ENCODE measurements at regions of chr22 and their contacts with region 1.

Region 1: GRCh38 chr22:19909350-19910179 is 32.0 kb upstream of the COMT start:
- DNase-seq: no peak
- H3K4me3 ChIP-seq: no peak overlapping the region
- H3K27me3 ChIP-seq: no peaks in the 10 kb centered on the region
- CTCF ChIP-seq: peak; percentile 90

Region 2: GRCh38 chr22:19756288-19757128 is 153.1 kb before region 1 on chr22:
- CTCF ChIA-PET with region 1: interaction called, 12 read pairs
- POLR2A ChIA-PET with region 1: no interaction called
- DNase-seq: no peak
- H3K4me3 ChIP-seq: no peak overlapping the region
- H3K27me3 ChIP-seq: peaks cover 40% of the 10 kb centered on the region
- CTCF ChIP-seq: peak; percentile 53

Region 3: DNA sequence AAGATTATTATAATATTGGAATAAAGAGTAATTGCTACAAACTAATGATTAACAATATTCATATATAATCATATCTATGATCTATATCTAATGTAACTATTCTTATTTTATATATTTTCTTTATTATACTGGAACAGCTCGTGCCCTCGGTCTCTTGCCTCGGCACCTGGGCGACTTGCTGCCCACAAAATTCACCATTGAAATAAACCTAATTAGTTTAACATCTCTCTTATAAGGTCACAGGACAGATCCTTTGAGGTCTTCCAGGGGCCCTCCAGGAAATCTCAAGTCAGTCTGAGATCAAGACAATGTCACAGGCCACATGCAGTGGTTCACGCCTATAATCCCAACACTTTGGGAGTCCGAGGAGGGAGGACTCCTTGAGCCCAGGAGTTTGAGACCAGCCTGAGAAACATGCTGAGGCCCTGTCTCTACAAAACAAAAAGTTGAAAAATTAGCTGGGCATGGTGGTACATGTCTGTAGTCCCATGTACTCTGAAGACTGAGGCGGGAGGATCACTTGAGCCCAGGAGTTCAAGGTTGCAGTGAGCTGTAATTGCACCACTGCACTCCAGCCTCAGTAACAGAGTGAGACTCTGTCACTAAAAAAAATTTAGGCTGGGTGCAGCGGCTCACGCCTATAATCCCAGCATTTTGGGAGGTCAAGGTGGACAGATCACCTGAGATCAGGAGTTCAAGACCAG is 38.6 kb after region 1 on chr22:
- CTCF ChIA-PET with region 1: interaction called, 10 read pairs
- POLR2A ChIA-PET with region 1: no interaction called
- DNase-seq: no peak
- H3K4me3 ChIP-seq: no peak overlapping the region
- H3K27me3 ChIP-seq: no peaks in the 10 kb centered on the region
- CTCF ChIP-seq: no peak

Measured in BJ (cell line).